Right ventricle myocardium inferior (tissue), 1 donor: ENCODE measurements at regions of chr20 and their contacts with region 1.

Region 1: GRCh38 chr20:57709931-57710799 is at the start of gene PMEPA1:
- DNase-seq: peak; percentile 95
- ATAC-seq: peak; percentile 96
- total RNA-seq, gene PMEPA1: 23.9 TPM

Region 2: GRCh38 chr20:57619051-57619834 is 90.9 kb before region 1 on chr20:
- intact Hi-C with region 1: no loop called
- DNase-seq: peak; percentile 93
- ATAC-seq: peak; percentile 23

Region 3: GRCh38 chr20:57672159-57672558 is 38.0 kb before region 1 on chr20:
- intact Hi-C with region 1: loop called (anchors 5 kb)
- DNase-seq: peak; percentile 86
- ATAC-seq: peak; percentile 83

Region 4: GRCh38 chr20:57748601-57749130 is 38.5 kb after region 1 on chr20:
- intact Hi-C with region 1: loop called (anchors 2 kb)
- DNase-seq: peak; percentile 86
- ATAC-seq: peak; percentile 83